Right lobe of liver (tissue), 6 donors: ENCODE measurements at regions of chr3 and their contacts with region 1.

Region 1: GRCh38 chr3:149115114-149115513 is 14.3 kb upstream of the HPS3 start:
- DNase-seq: no peak
- ATAC-seq: no peak
- H3K4me3 ChIP-seq: no peak overlapping the region
- H3K27ac ChIP-seq: no peak overlapping the region
- H3K4me1 ChIP-seq: no peaks in the 10 kb centered on the region
- H3K27me3 ChIP-seq: no peaks in the 10 kb centered on the region
- CTCF ChIP-seq: no peak
- POLR2A ChIP-seq: no peak

Region 2: GRCh38 chr3:149267565-149267964 is 152.5 kb after region 1 on chr3:
- intact Hi-C with region 1: loop called in 1 of 2 experiments (anchors 5 kb)
- DNase-seq: no peak
- ATAC-seq: no peak
- H3K4me3 ChIP-seq: no peak overlapping the region
- H3K27ac ChIP-seq: no peak overlapping the region
- H3K4me1 ChIP-seq: no peaks in the 10 kb centered on the region
- H3K27me3 ChIP-seq: no peaks in the 10 kb centered on the region
- CTCF ChIP-seq: no peak
- POLR2A ChIP-seq: no peak